ENCODE measurements at regions of chr10 and their contacts with region 1.

Region 1: GRCh38 chr10:32346134-32346550 is 816 bp downstream of the EPC1 start:
- DNase-seq: peak; percentile 96
- H3K4me3 ChIP-seq: peak overlapping the region; percentile 82
- H3K27ac ChIP-seq: peak overlapping the region; percentile 92
- H3K4me1 ChIP-seq: peaks cover 63% of the 10 kb centered on the region
- CTCF ChIP-seq: peak; percentile 94

Region 2: GRCh38 chr10:32055813-32056600 is 290.1 kb before region 1 on chr10 and contains the start of gene KIF5B:
- CTCF ChIA-PET with region 1: no interaction called
- POLR2A ChIA-PET with region 1: interaction called, 3 read pairs
- intact Hi-C with region 1: loop called (anchors 1 kb)
- DNase-seq: peak; percentile 92
- H3K4me3 ChIP-seq: peak within 1 kb of the TSS; percentile 87
- H3K27ac ChIP-seq: peak within 1 kb of the TSS; percentile 78
- H3K4me1 ChIP-seq: peaks cover 37% of the 10 kb centered on the region
- CTCF ChIP-seq: no peak
- total RNA-seq, gene KIF5B: 63.8 and 73.8 TPM in 2 replicates

Region 3: DNA sequence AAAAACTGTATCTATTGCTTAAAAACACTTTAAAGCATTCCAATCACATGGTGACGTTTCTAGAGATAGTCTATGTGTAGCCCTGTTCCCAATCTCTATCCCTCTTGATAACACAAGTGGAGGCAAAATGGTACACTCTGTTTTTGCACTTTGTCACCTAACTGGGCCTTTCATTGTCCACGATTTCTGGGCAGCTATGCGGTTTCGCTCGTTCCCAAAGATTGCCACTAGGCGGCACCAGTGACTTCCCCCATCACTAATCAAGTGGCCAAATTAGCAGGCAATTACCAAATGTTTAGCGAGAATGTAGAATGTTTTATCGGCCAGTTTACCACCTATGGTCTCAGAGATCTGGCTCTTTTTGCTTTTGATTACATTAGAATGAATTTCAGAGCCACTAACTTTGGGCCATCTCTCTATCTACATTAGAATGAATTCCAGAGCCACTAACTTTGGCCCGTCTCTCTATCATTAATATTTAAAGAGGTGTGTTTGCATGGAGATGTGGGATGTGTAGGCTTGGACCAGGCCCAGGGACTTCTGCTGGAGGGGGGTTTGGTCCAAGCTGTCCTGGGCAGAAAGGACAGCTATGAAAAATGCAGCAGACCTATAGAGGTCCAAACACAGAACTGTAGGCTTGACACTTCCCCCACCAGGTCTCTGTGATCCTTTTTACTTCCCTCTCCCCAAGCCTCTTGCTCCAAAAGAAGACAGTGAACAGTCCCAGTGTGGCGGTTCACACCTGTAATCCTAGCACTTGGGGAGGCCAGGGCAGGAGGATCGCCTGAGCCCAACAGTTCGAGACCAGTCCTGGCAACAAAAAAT is 89.3 kb before region 1 on chr10:
- CTCF ChIA-PET with region 1: no interaction called
- POLR2A ChIA-PET with region 1: interaction called, 7 read pairs
- intact Hi-C with region 1: loop called (anchors 1 kb)
- DNase-seq: peak; percentile 79
- H3K4me3 ChIP-seq: peak overlapping the region; percentile 20
- H3K27ac ChIP-seq: no peak overlapping the region
- H3K4me1 ChIP-seq: peaks cover 7% of the 10 kb centered on the region
- CTCF ChIP-seq: peak; percentile 98

Region 4: GRCh38 chr10:32367793-32368453 is 21.8 kb after region 1 on chr10:
- CTCF ChIA-PET with region 1: no interaction called
- POLR2A ChIA-PET with region 1: interaction called, 8 read pairs
- intact Hi-C with region 1: loop called (anchors 1 kb)
- DNase-seq: peak; percentile 72
- H3K4me3 ChIP-seq: no peak overlapping the region
- H3K27ac ChIP-seq: no peak overlapping the region
- H3K4me1 ChIP-seq: peaks cover 11% of the 10 kb centered on the region
- CTCF ChIP-seq: peak; percentile 93

Region 5: GRCh38 chr10:32426186-32426585 is 80.0 kb after region 1 on chr10:
- CTCF ChIA-PET with region 1: no interaction called
- POLR2A ChIA-PET with region 1: no interaction called
- intact Hi-C with region 1: no loop called
- DNase-seq: no peak
- H3K4me3 ChIP-seq: no peak overlapping the region
- H3K27ac ChIP-seq: no peak overlapping the region
- H3K4me1 ChIP-seq: no peaks in the 10 kb centered on the region
- CTCF ChIP-seq: no peak

Region 6: DNA sequence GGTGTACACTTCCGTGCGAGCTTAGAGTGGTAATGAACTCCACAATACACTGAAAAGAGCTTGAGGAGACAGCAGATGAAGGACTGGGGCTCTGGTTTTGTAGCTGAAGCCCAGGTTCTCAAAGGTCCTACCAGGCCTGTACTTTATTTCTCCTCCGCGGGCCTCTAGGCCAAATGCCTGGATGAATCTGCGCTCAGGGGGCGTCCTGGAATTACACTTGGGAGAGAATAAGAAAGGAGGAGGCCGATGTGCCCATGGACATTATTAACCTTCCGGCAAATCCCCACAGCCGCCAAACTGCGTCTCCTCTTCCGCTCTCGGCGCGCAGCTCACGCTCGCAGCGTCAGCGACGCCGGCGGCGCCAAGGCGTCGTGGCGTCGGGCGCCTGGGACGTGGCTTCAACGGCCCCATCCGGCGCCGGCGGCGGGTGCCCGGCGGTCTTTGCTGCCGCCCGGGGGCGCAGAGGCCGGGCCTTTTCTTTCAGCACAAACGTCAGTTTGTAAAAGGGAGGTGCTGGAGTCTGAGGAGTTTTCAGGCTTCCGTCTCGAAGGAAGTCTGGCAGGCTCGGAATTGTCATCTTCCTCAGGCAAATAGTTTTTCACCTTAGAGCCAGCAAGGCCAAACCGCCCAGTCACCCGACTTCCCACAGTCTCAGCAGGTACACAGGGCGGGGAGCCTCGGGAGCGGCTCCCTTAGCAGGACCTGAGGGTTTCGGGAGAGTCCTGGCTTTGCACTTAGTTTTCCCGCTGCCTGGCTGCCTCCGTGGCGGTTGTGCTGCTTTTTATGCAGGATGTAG is 99.8 kb after region 1 on chr10 and contains the start of gene CCDC7:
- CTCF ChIA-PET with region 1: no interaction called
- POLR2A ChIA-PET with region 1: no interaction called
- intact Hi-C with region 1: loop called (anchors 1 kb)
- DNase-seq: peak; percentile 93
- H3K4me3 ChIP-seq: peak within 1 kb of the TSS; percentile 79
- H3K27ac ChIP-seq: peak within 1 kb of the TSS; percentile 66
- H3K4me1 ChIP-seq: peaks cover 8% of the 10 kb centered on the region
- CTCF ChIP-seq: peak; percentile 72
- total RNA-seq, gene CCDC7: 9.8 and 10.9 TPM in 2 replicates

Measured in OCI-LY7 (cell line).